AG04449 (cell line): ENCODE measurements at regions of chr17 and their contacts with region 1.

Region 1: DNA sequence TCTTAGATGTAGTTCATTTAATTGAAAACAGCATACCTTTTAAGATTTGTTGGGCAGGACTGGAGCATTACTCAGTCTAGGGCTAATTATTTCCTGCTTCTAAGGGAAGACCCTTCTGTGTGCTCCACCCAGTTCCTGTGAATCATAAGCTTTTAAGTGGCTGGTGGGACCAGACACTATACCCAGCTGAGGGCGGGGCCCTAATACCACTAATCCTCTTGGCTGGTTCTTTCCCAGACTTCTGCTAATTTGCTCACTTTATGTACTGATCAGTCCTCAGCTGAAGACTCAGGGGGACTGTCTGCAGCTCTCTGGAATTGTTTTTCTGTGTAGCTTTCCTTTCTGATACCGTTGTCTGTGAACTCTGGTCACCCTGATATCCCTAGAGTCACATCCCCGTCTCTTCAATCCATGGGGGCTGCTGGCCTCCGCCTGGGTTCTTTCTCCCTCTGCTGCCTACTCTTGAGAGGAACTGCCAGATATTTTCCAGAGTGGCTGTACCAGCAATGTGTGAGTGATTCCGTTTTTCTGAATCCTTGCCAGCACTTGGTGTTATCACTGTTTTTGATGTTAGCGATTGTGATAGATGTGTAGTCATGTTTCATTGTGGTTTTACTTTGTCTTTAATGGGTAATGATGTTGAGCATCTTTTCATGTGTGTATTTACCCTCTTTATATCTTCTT is 35.1 kb downstream of the MFSD11 start:
- DNase-seq: peak; percentile 58
- H3K4me3 ChIP-seq: peak overlapping the region; percentile 36
- CTCF ChIP-seq: no peak

Region 2: GRCh38 chr17:76654408-76654807 is 118.6 kb before region 1 on chr17:
- CTCF ChIA-PET with region 1: no interaction called
- POLR2A ChIA-PET with region 1: no interaction called
- DNase-seq: no peak
- H3K4me3 ChIP-seq: no peak overlapping the region
- CTCF ChIP-seq: no peak

Region 3: DNA sequence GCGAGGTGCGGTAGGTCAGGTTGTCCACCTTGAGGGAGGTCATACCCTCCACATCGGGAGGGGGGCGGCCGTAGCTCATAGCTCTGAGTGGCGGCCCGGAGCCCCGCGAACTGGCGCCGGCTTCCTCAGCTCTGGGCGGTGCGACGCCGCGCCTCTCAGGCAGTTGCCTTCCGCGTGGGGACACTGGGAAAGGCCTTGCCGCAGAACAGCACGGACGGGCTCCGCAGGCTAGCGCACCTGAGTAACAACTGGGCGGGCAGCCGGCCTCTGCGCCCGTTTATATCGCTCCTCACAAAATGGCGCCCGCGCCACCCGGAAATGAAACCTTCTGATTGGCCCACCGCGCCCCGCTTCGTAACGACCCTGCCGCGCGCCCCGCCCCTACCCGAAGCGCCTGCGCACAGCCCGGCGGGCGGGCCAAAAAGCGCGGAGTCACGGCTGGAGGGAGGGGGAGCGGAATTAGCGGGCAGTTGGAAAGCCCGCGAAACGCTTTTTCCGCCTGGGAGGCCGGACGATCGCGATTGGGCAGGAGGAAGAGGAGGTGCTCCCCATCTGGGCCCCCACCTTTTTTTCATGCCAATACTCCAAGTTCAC is 35.8 kb before region 1 on chr17 and contains the start of gene SRSF2:
- CTCF ChIA-PET with region 1: interaction called, 3 read pairs
- POLR2A ChIA-PET with region 1: interaction called, 10 read pairs
- DNase-seq: peak; percentile 84
- H3K4me3 ChIP-seq: peak within 1 kb of the TSS; percentile 97
- CTCF ChIP-seq: no peak

Region 4: GRCh38 chr17:76753061-76753961 is 19.7 kb before region 1 on chr17:
- CTCF ChIA-PET with region 1: no interaction called
- POLR2A ChIA-PET with region 1: no interaction called
- DNase-seq: no peak
- H3K4me3 ChIP-seq: no peak overlapping the region
- CTCF ChIP-seq: no peak

Region 5: DNA sequence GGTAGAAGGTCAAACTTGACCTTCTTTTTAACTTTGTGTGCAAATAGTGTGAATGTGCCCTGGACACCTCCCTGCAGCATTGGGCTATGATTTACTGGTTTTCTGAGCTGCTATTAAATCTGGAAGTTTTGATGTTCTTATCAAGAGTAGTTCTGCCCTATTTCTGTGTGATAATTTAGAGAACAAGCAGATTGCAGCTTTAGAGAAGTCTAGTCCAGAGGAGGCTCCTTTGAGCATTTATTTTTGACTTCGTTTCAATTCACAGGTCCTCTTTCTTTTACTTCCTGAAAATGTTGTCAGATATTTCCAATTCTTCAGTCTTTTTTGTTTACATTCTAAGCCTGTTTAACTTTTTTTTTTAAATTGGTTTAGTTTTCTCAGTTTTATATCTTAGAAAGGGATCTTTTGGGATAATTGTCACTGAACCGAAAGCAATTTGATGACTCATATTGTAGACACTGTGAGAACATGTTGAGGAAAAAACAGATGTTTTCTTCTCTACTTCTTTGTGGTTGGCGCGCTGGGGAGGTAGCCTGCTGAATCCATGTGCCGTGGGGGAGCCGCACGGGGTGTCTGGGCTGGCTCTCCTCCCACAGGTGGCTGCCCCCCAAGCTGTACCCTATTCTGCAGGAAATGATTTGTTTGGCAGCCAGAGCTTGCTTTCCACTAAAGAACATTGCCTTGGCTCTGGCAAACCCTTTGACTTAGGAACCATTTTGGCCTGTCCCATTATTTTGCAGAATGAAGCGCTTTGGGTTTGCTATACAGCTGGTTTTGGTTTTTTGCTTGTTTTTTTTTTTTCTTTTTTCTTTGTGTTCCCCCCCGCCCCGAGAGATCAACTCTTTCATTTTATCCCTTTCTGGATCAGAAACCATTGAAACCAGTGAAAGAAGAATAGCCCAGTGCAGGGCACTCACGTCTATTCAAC is 18.3 kb after region 1 on chr17:
- CTCF ChIA-PET with region 1: no interaction called
- POLR2A ChIA-PET with region 1: no interaction called
- DNase-seq: no peak
- H3K4me3 ChIP-seq: peak overlapping the region; percentile 33
- CTCF ChIP-seq: no peak